B cell (primary cell): ENCODE measurements at regions of chr9 and their contacts with region 1.

Region 1: GRCh38 chr9:131407717-131408195 is 13.9 kb downstream of the PRRC2B start:
- DNase-seq: no peak
- ATAC-seq: no peak
- H3K4me3 ChIP-seq: no peak overlapping the region
- H3K4me3 Mint-ChIP-seq: no peak overlapping the region
- H3K27ac ChIP-seq: peak overlapping the region in 1 of 2 donors; percentile 60
- H3K27ac Mint-ChIP-seq: peak overlapping the region; percentile 27
- H3K4me1 ChIP-seq: peaks cover 65 to 71% of the 10 kb centered on the region in 2 donors
- H3K4me1 Mint-ChIP-seq: peaks cover 82% of the 10 kb centered on the region
- H3K27me3 ChIP-seq: no peaks in the 10 kb centered on the region
- H3K27me3 Mint-ChIP-seq: no peaks in the 10 kb centered on the region
- CTCF ChIP-seq: no peak

Region 2: DNA sequence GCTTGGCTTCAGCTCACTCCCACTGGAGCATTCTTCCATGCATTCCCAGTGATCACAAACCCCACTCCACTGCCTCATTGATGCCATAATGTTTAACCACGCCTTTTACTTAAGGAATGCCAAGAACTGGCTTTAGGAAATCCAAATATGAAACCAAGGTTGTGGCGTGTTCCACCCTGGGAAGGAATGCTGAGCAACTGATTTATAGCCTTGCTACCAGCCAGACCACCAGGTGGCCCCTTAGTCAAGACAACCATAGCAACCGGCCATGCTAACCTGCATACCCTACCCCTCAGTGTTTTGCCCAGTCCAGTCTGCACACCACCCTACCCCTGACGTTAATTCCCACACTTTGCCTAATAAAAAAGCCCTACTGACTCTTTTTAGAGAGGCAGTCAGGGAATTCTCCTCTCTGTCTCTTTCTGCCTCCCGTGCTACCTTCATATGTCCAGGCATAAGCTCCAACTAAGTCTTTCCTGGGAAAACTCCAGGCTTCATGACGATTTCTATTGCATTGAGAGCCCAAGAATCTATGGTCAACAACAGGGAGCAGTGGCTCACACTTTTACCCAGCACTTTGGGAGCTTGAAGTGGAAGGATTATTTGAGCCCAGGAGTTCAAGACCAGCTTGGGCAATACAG is 40.9 kb before region 1 on chr9:
- CTCF ChIA-PET with region 1: no interaction called
- POLR2A ChIA-PET with region 1: no interaction called
- intact Hi-C with region 1: loop called (anchors 5 kb)
- DNase-seq: peak; percentile 24
- ATAC-seq: no peak
- H3K4me3 ChIP-seq: no peak overlapping the region
- H3K4me3 Mint-ChIP-seq: no peak overlapping the region
- H3K27ac ChIP-seq: no peak overlapping the region
- H3K27ac Mint-ChIP-seq: no peak overlapping the region
- H3K4me1 ChIP-seq: no peaks in the 10 kb centered on the region
- H3K4me1 Mint-ChIP-seq: peaks cover under 1% of the 10 kb centered on the region
- H3K27me3 ChIP-seq: no peaks in the 10 kb centered on the region
- H3K27me3 Mint-ChIP-seq: no peaks in the 10 kb centered on the region
- CTCF ChIP-seq: no peak